ENCODE measurements at regions of chr11 and their contacts with region 1.

Region 1: GRCh38 chr11:6389921-6390724 is at the start of gene SMPD1:
- H3K4me3 ChIP-seq: peak within 1 kb of the TSS; percentile 84
- H3K27ac ChIP-seq: peak within 1 kb of the TSS; percentile 50; the same call in 1 of the 2 replicates
- H3K4me1 ChIP-seq: no peaks in the 10 kb centered on the region
- CTCF ChIP-seq: no peak

Region 2: DNA sequence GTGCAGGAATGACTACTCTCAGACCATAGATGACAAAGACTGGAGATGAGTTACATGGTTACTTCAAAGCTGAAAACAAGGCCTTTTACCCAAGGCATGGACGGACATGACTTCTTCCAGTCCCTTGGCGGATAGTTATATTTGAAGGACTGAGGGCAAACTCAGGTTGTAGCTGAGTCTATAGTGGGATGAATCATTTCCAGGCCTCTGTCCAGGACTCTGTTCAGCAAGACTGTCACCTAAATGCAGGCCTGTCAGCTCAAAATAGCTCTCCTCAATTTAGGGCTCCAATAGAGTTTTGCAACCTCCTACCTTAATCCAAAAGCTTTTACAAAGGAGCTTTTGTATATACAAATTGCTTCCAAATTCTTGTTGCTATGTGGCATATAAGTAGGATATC is 1368.1 kb before region 1 on chr11:
- CTCF ChIA-PET with region 1: no interaction called
- POLR2A ChIA-PET with region 1: no interaction called
- H3K4me3 ChIP-seq: no peak overlapping the region
- H3K27ac ChIP-seq: no peak overlapping the region
- H3K4me1 ChIP-seq: no peaks in the 10 kb centered on the region
- CTCF ChIP-seq: no peak

Region 3: DNA sequence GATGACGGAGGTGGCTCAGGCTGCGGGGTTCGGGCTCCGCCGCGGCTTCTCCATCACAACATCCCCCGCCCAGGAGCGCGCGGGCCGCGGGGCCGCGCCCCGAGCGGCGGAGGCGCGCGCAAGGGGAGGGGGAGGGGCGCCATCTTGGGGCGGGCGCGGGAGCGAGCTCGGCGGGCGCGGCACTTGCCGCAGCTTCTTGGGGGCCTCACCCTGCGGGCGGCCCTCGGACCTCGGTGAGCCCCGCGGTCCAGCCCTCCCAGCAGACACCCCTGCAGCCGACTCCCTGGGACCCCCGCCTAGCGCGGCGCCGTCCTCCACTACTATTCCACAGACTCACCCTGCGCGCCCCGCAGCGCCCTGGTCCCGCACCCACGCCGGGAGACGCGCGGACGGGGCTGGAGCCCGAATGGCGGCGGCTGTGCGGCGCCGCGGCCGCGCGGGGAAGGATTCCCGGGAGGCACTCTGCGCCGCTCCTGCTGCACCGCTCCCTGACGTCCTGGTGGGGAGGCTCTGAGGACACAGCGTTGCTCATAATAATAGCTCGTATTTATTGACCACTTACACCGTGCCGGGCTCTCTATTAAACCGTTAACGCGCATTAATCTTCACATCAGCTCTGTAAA is 29.0 kb after region 1 on chr11 and contains the start of gene APBB1:
- CTCF ChIA-PET with region 1: no interaction called
- POLR2A ChIA-PET with region 1: interaction called, 26 read pairs
- H3K4me3 ChIP-seq: peak within 1 kb of the TSS; percentile 92
- H3K27ac ChIP-seq: peak within 1 kb of the TSS; percentile 69; the same call in 1 of the 2 replicates
- H3K4me1 ChIP-seq: no peaks in the 10 kb centered on the region
- CTCF ChIP-seq: no peak

Region 4: GRCh38 chr11:6473481-6474422 is 83.6 kb after region 1 on chr11 and contains the start of gene TRIM3:
- CTCF ChIA-PET with region 1: no interaction called
- POLR2A ChIA-PET with region 1: interaction called, 16 read pairs
- H3K4me3 ChIP-seq: peak within 1 kb of the TSS; percentile 74
- H3K27ac ChIP-seq: peak within 1 kb of the TSS; percentile 50; the same call in 1 of the 2 replicates
- H3K4me1 ChIP-seq: no peaks in the 10 kb centered on the region
- CTCF ChIP-seq: peak; percentile 40; the same call in 1 of the 2 replicates

Region 5: GRCh38 chr11:6544921-6545850 is 155.1 kb after region 1 on chr11:
- CTCF ChIA-PET with region 1: no interaction called
- POLR2A ChIA-PET with region 1: no interaction called
- H3K4me3 ChIP-seq: no peak overlapping the region
- H3K27ac ChIP-seq: no peak overlapping the region
- H3K4me1 ChIP-seq: no peaks in the 10 kb centered on the region
- CTCF ChIP-seq: no peak

Region 6: DNA sequence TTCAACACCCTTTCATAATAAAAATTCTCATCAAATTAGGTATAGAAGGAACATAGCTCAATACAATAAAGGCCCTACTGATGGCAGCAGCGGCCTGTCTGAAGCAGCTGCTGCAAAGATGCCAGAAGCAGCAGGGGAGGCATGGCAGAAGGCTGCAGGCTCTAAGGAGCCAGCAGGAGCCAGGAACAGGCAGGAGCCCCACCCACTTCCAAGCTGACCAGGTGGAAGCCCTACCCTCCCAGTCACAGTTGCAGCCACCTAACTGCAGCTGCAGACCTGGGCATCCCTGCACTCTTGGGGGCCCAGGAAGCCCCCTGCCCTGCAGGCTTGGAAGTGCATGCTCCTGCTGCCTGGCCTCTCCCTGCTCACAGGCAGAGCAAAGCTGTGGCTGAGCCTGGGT is 427.6 kb after region 1 on chr11:
- CTCF ChIA-PET with region 1: no interaction called
- POLR2A ChIA-PET with region 1: no interaction called
- H3K4me3 ChIP-seq: no peak overlapping the region
- H3K27ac ChIP-seq: no peak overlapping the region
- H3K4me1 ChIP-seq: no peaks in the 10 kb centered on the region
- CTCF ChIP-seq: no peak

Measured in HEK293 (cell line).